GM12878 (cell line): ENCODE measurements at regions of chr20 and their contacts with region 1.

Region 1: GRCh38 chr20:31951530-31952453 is at the start of gene PDRG1:
- DNase-seq: peak; percentile 76
- ATAC-seq: peak; percentile 98
- H3K4me3 ChIP-seq: peak within 1 kb of the TSS; percentile 90
- H3K27ac ChIP-seq: peak within 1 kb of the TSS; percentile 55
- H3K4me1 ChIP-seq: peaks cover 6% of the 10 kb centered on the region
- H3K27me3 ChIP-seq: no peaks in the 10 kb centered on the region
- CTCF ChIP-seq: peak; percentile 96 to 99 (median 96); a peak in 5 of 6 replicates
- EP300 ChIP-seq: no peak
- POLR2A ChIP-seq: peak; percentile 95
- RAD21 ChIP-seq: peak; percentile 86
- polyA plus RNA-seq, gene PDRG1: 34.1 to 55.8 TPM

Region 2: DNA sequence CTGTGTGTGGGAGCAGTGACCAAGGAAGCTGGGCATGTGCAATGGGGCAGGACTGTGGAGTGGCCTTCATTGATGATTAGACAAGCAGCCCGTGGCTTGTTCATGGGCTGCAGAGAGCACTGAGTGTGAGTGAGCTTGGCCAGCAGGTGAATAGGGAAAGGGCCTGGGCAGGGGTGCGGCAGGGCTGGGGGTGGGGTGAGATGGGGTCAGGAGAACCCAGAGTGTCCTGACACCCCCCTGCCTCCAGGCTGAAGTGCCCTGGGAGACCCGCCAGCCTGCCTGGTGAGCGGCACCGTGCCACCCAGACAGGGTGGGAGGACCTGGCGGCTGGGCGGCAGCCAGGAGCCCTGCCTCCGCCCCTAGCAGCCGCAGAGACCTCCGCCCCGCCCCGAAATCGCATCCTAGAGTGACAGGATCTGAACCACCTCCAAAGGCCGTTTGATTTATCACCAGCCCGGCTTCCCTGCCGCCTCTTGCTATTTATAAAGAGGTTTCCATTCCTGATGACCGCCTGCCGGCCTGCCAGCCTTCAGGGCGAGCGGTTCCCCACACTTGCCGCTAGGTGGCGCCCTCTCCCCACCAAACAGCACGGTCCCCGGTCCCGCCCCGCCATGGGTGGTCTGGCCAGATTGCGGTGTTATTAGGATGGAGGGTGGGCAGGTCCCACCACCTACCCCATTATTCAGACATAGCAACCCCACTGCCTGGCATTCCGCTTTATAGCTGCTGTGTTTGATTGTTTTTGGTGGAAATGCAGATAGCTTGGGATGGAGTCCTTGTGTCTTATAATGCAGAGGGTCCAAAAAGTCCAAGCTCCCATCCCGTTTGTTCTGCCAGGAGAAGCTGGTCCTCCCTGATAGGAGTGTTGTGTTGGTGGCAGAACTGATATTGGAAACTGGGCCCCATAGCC is 129.1 kb before region 1 on chr20:
- CTCF ChIA-PET with region 1: interaction called, 36 read pairs
- POLR2A ChIA-PET with region 1: no interaction called
- RAD21 ChIA-PET with region 1: interaction called, 9 read pairs
- SMC1A ChIA-PET with region 1: interaction called, 17 read pairs
- in situ Hi-C with region 1: no loop called
- intact Hi-C with region 1: loop called (anchors 1 kb)
- DNase-seq: no peak
- ATAC-seq: peak; percentile 97
- H3K4me3 ChIP-seq: no peak overlapping the region
- H3K27ac ChIP-seq: no peak overlapping the region
- H3K4me1 ChIP-seq: no peaks in the 10 kb centered on the region
- H3K27me3 ChIP-seq: no peaks in the 10 kb centered on the region
- CTCF ChIP-seq: peak; percentile 96 to 98 (median 98); a peak in 5 of 6 replicates
- EP300 ChIP-seq: no peak
- POLR2A ChIP-seq: no peak
- RAD21 ChIP-seq: peak; percentile 86

Region 3: DNA sequence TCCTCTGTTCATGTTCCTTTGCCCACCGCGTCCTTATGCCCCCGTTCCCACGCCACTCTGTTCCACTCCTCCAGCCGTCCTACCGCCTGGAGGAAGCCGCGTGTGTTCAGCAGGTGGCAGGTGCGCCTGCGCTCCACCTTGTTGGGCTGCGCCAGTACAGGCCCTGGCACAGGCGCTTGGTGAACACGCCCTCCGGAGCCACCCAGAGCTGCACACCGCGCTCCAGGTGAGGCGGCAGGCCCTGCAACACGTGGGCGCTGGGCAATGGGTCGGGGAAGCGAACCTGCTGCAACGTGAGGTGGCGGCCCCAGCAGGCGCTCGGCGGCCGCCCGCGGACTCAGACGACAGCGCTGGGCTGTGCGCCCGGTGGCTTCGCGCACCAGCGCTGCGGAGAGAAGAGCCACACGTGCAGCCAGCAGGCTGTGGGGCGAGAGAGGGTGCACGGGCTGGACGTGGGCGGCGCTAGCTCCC is 102.3 kb before region 1 on chr20:
- CTCF ChIA-PET with region 1: interaction called, 307 read pairs
- POLR2A ChIA-PET with region 1: interaction called, 10 read pairs
- RAD21 ChIA-PET with region 1: interaction called, 248 read pairs
- SMC1A ChIA-PET with region 1: interaction called, 181 read pairs
- in situ Hi-C with region 1: no loop called
- intact Hi-C with region 1: loop called (anchors 1 kb)
- DNase-seq: no peak
- ATAC-seq: no peak
- H3K4me3 ChIP-seq: no peak overlapping the region
- H3K27ac ChIP-seq: no peak overlapping the region
- H3K4me1 ChIP-seq: peaks cover 5% of the 10 kb centered on the region; the same call in 1 of the 2 replicates
- H3K27me3 ChIP-seq: no peaks in the 10 kb centered on the region; a peak in 2 of 4 replicates
- CTCF ChIP-seq: no peak
- EP300 ChIP-seq: no peak
- POLR2A ChIP-seq: no peak
- RAD21 ChIP-seq: no peak

Region 4: GRCh38 chr20:31861346-31862156 is 90.2 kb before region 1 on chr20:
- CTCF ChIA-PET with region 1: interaction called, 307 read pairs
- POLR2A ChIA-PET with region 1: interaction called, 8 read pairs
- RAD21 ChIA-PET with region 1: interaction called, 248 read pairs
- SMC1A ChIA-PET with region 1: interaction called, 181 read pairs
- in situ Hi-C with region 1: loop called (anchors 5 kb)
- intact Hi-C with region 1: no loop called
- DNase-seq: no peak
- ATAC-seq: peak; percentile 93
- H3K4me3 ChIP-seq: peak overlapping the region; percentile 53
- H3K27ac ChIP-seq: no peak overlapping the region
- H3K4me1 ChIP-seq: peaks cover 10% of the 10 kb centered on the region
- H3K27me3 ChIP-seq: peaks cover 0 to 9% of the 10 kb centered on the region in 2 experiments; a peak in 1 of 4 replicates
- CTCF ChIP-seq: no peak
- EP300 ChIP-seq: no peak
- POLR2A ChIP-seq: peak; percentile 62; the same call in 1 of the 2 replicates
- RAD21 ChIP-seq: no peak

Region 5: GRCh38 chr20:31879143-31879987 is 72.4 kb before region 1 on chr20:
- CTCF ChIA-PET with region 1: interaction called, 26 read pairs
- POLR2A ChIA-PET with region 1: interaction called, 7 read pairs
- RAD21 ChIA-PET with region 1: interaction called, 26 read pairs
- SMC1A ChIA-PET with region 1: interaction called, 37 read pairs
- in situ Hi-C with region 1: no loop called
- intact Hi-C with region 1: no loop called
- DNase-seq: peak; percentile 45
- ATAC-seq: peak; percentile 98
- H3K4me3 ChIP-seq: peak overlapping the region; percentile 88
- H3K27ac ChIP-seq: no peak overlapping the region
- H3K4me1 ChIP-seq: peaks cover 3% of the 10 kb centered on the region; the same call in 1 of the 2 replicates
- H3K27me3 ChIP-seq: no peaks in the 10 kb centered on the region
- CTCF ChIP-seq: no peak
- EP300 ChIP-seq: no peak
- POLR2A ChIP-seq: no peak
- RAD21 ChIP-seq: no peak

Region 6: GRCh38 chr20:31923388-31924331 is 28.1 kb before region 1 on chr20:
- CTCF ChIA-PET with region 1: interaction called, 23 read pairs
- POLR2A ChIA-PET with region 1: interaction called, 4 read pairs
- RAD21 ChIA-PET with region 1: interaction called, 12 read pairs
- SMC1A ChIA-PET with region 1: interaction called, 14 read pairs
- in situ Hi-C with region 1: no loop called
- intact Hi-C with region 1: no loop called
- DNase-seq: peak; percentile 47
- ATAC-seq: peak; percentile 92
- H3K4me3 ChIP-seq: no peak overlapping the region
- H3K27ac ChIP-seq: no peak overlapping the region
- H3K4me1 ChIP-seq: peaks cover 11% of the 10 kb centered on the region
- H3K27me3 ChIP-seq: no peaks in the 10 kb centered on the region
- CTCF ChIP-seq: 0 out of 6 replicates have a peak, but pooled peaks of 1 of the 3 experiments have one; percentile 4
- EP300 ChIP-seq: peak in 1 of 2 experiments; percentile 72; a peak in 2 of 4 replicates
- POLR2A ChIP-seq: no peak
- RAD21 ChIP-seq: no peak

Region 7: DNA sequence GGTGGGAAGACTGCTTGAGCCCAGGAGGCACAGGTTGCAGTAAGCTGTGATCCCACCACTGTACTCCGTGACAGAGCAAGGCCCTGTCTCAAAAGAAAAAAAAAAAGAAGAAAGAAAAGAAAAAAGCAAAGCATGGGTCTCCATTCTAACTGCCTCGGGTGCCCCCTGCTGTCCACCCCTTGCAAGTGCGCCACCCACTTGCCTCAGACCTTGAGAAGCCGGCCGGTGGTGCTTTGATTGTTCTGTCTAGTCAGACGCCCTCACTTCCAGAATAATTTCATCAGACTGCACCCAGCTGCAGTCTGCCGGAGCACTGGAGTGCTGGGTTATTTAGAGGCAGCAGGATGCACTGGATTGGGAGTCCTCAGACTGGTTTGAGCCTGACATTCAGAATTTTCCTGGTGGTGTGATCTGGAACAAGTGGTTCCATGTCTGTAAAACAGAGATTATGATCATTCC is 140.1 kb after region 1 on chr20:
- CTCF ChIA-PET with region 1: interaction called, 21 read pairs
- POLR2A ChIA-PET with region 1: no interaction called
- RAD21 ChIA-PET with region 1: interaction called, 8 read pairs
- SMC1A ChIA-PET with region 1: interaction called, 7 read pairs
- in situ Hi-C with region 1: no loop called
- intact Hi-C with region 1: loop called (anchors 10 kb)
- DNase-seq: no peak
- ATAC-seq: peak; percentile 95
- H3K4me3 ChIP-seq: no peak overlapping the region
- H3K27ac ChIP-seq: no peak overlapping the region
- H3K4me1 ChIP-seq: peaks cover 8% of the 10 kb centered on the region
- H3K27me3 ChIP-seq: no peaks in the 10 kb centered on the region; a peak in 1 of 4 replicates
- CTCF ChIP-seq: peak; percentile 82 to 95 (median 94)
- EP300 ChIP-seq: no peak
- POLR2A ChIP-seq: no peak
- RAD21 ChIP-seq: peak; percentile 90